Heart right ventricle (tissue), 16 donors: ENCODE measurements at regions of chr6 and their contacts with region 1.

Region 1: GRCh38 chr6:158972241-158973233 is 27.5 kb downstream of the RSPH3 start:
- DNase-seq: no peak
- ATAC-seq: peak in 4 of 8 donors; percentile 41 to 74 (median 55)
- H3K4me3 ChIP-seq: no peak overlapping the region
- H3K27ac ChIP-seq: no peak overlapping the region
- H3K4me1 ChIP-seq: peaks cover 0 to 6% (median 0%) of the 10 kb centered on the region in 9 donors
- H3K27me3 ChIP-seq: no peaks in the 10 kb centered on the region
- CTCF ChIP-seq: peak; percentile 34 to 77 (median 61)

Region 2: GRCh38 chr6:158711264-158711663 is 261.3 kb before region 1 on chr6:
- intact Hi-C with region 1: loop called in 5 of 10 experiments (anchors 1 to 5 kb)
- DNase-seq: no peak
- ATAC-seq: no peak
- H3K4me3 ChIP-seq: peak overlapping the region in 6 of 10 donors; percentile 15 to 35 (median 23)
- H3K27ac ChIP-seq: no peak overlapping the region
- H3K4me1 ChIP-seq: peaks cover 10 to 32% (median 23%) of the 10 kb centered on the region in 9 donors
- H3K27me3 ChIP-seq: no peaks in the 10 kb centered on the region
- CTCF ChIP-seq: no peak

Region 3: GRCh38 chr6:158718461-158719046 is 254.0 kb before region 1 on chr6:
- intact Hi-C with region 1: loop called in 3 of 10 experiments (anchors 5 kb)
- DNase-seq: no peak
- ATAC-seq: peak; percentile 35 to 57 (median 42)
- H3K4me3 ChIP-seq: no peak overlapping the region
- H3K27ac ChIP-seq: peak overlapping the region in 1 of 10 donors; percentile 75
- H3K4me1 ChIP-seq: peaks cover 0 to 67% (median 0%) of the 10 kb centered on the region in 9 donors
- H3K27me3 ChIP-seq: no peaks in the 10 kb centered on the region
- CTCF ChIP-seq: peak; percentile 35 to 63 (median 54)

Region 4: DNA sequence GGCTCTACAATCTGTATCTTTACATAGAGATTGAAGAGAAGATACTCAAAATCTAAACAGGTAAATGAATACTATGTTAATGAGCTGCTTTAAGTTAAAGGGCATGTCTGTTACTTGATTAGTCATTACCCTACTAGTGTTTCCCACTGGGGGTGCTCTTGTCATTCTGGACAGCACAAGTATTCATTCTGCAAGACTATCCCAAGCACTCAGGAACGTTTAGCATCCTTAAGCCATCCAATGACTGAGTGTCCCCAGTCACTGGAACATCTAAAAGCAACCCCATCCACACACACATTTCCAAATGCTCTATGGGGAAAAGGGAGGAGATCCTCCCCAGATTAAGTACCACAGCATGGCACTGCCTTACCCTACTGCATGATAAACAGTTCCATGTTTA is 179.1 kb before region 1 on chr6:
- intact Hi-C with region 1: loop called in 6 of 10 experiments (anchors 5 to 10 kb)
- DNase-seq: no peak
- ATAC-seq: peak in 5 of 8 donors; percentile 38 to 54 (median 49)
- H3K4me3 ChIP-seq: no peak overlapping the region
- H3K27ac ChIP-seq: no peak overlapping the region
- H3K4me1 ChIP-seq: peaks cover 4 to 71% (median 40%) of the 10 kb centered on the region in 9 donors
- H3K27me3 ChIP-seq: no peaks in the 10 kb centered on the region
- CTCF ChIP-seq: peak in 8 of 9 donors; percentile 23 to 56 (median 43)

Region 5: GRCh38 chr6:158819213-158819909 is 153.2 kb before region 1 on chr6 and contains the start of gene EZR:
- intact Hi-C with region 1: loop called in 1 of 10 experiments (anchors 10 kb)
- DNase-seq: peak; percentile 74 to 87
- ATAC-seq: peak; percentile 71 to 81 (median 78)
- H3K4me3 ChIP-seq: peak within 1 kb of the TSS; percentile 57 to 95 (median 87)
- H3K27ac ChIP-seq: peak within 1 kb of the TSS; percentile 82 to 96 (median 94)
- H3K4me1 ChIP-seq: peaks cover 3 to 43% (median 31%) of the 10 kb centered on the region in 9 donors
- H3K27me3 ChIP-seq: no peaks in the 10 kb centered on the region
- CTCF ChIP-seq: peak in 2 of 9 donors; percentile 7 to 17
- total RNA-seq, gene EZR: 148 to 227 (median 186) TPM